HepG2 (cell line): ENCODE measurements at regions of chr18 and their contacts with region 1.

Region 1: GRCh38 chr18:267688-268552 is at the start of gene THOC1:
- DNase-seq: peak; percentile 82
- ATAC-seq: peak; percentile 91
- H3K4me3 ChIP-seq: peak within 1 kb of the TSS; percentile 89 to 100 (median 97)
- H3K27ac ChIP-seq: peak within 1 kb of the TSS; percentile 93
- H3K4me1 ChIP-seq: peaks cover 33% of the 10 kb centered on the region
- H3K27me3 ChIP-seq: no peaks in the 10 kb centered on the region; a peak in 1 of 5 replicates
- CTCF ChIP-seq: peak; percentile 37
- EP300 ChIP-seq: no peak
- POLR2A ChIP-seq: peak; percentile 91; a peak in 3 of 4 replicates
- RAD21 ChIP-seq: peak; percentile 30; the same call in 1 of the 2 replicates
- total RNA-seq, gene THOC1: 47.3 and 56.7 TPM in 2 replicates

Region 2: DNA sequence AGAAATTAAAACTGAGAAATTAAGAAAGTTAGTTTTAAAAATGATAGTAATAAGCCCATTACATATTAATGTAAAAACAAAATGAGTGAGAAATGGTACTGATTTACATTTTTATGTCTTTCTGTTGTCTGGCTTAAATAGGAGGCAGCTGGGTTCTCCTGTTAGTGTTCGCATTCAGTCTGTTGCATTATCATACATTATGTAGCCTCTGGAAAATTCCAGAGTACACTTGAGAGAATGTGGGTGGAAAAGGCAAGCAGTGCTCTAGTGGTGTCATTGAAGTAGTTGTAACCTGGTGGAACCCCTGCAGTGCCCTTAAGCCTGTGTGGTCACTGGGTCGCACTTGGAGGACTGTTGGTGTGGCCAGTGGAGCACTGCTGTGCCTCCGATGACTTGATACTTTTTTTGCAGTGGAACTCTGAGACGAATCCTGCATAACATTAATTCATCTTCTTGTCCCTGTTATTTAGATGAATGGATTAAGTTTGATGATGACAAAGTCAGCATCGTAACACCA is 57.2 kb before region 1 on chr18:
- CTCF ChIA-PET with region 1: no interaction called
- POLR2A ChIA-PET with region 1: no interaction called
- in situ Hi-C with region 1: no loop called
- intact Hi-C with region 1: no loop called
- DNase-seq: no peak
- ATAC-seq: no peak
- H3K4me3 ChIP-seq: no peak overlapping the region
- H3K27ac ChIP-seq: no peak overlapping the region
- H3K4me1 ChIP-seq: no peaks in the 10 kb centered on the region
- H3K27me3 ChIP-seq: no peaks in the 10 kb centered on the region
- CTCF ChIP-seq: no peak
- EP300 ChIP-seq: no peak
- POLR2A ChIP-seq: no peak
- RAD21 ChIP-seq: no peak

Region 3: DNA sequence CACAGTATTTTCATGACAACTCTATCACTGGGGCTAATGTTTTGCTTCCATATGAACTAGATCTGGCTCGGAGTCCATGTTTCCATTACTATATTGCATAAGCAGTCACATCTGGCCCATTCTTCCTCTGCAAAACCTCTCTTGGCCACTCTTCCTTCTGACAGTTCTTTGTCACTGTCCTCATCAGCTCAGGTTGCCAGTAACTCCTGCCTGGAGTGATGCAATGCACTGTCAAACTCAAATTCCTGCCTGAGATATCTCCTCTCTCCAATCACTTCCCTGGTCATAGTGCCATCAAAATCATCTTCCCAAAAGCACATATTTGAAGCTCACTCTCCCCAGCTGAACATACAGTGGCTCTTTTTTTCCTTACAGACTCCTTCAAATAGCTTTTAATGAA is 166.5 kb after region 1 on chr18:
- CTCF ChIA-PET with region 1: no interaction called
- POLR2A ChIA-PET with region 1: no interaction called
- in situ Hi-C with region 1: no loop called
- intact Hi-C with region 1: no loop called
- DNase-seq: no peak
- ATAC-seq: no peak
- H3K4me3 ChIP-seq: no peak overlapping the region
- H3K27ac ChIP-seq: no peak overlapping the region
- H3K4me1 ChIP-seq: no peaks in the 10 kb centered on the region
- H3K27me3 ChIP-seq: no peaks in the 10 kb centered on the region; a peak in 2 of 5 replicates
- CTCF ChIP-seq: no peak
- EP300 ChIP-seq: no peak
- POLR2A ChIP-seq: no peak
- RAD21 ChIP-seq: no peak

Region 4: GRCh38 chr18:477565-477964 is 209.6 kb after region 1 on chr18:
- CTCF ChIA-PET with region 1: no interaction called
- POLR2A ChIA-PET with region 1: interaction called, 3 read pairs
- in situ Hi-C with region 1: no loop called
- intact Hi-C with region 1: loop called (anchors 5 kb)
- DNase-seq: peak; percentile 27
- ATAC-seq: peak; percentile 65; the same call in 2 of the 3 replicates
- H3K4me3 ChIP-seq: no peak overlapping the region
- H3K27ac ChIP-seq: no peak overlapping the region
- H3K4me1 ChIP-seq: peaks cover 66% of the 10 kb centered on the region
- H3K27me3 ChIP-seq: peaks cover 0 to 4% of the 10 kb centered on the region in 2 experiments; a peak in 2 of 5 replicates
- CTCF ChIP-seq: peak; percentile 66
- EP300 ChIP-seq: no peak
- POLR2A ChIP-seq: no peak
- RAD21 ChIP-seq: peak; percentile 25; the same call in 1 of the 2 replicates